WTC11 (cell line): ENCODE measurements at regions of chr16 and their contacts with region 1.

Region 1: GRCh38 chr16:30984669-30985400 is at the start of gene HSD3B7:
- DNase-seq: peak; percentile 95
- ATAC-seq: peak; percentile 85
- H3K4me3 Mint-ChIP-seq: peak within 1 kb of the TSS; percentile 61
- H3K27ac Mint-ChIP-seq: 0 out of 2 replicates have a peak within 1 kb of the TSS, but pooled peaks have one; percentile 27
- H3K4me1 Mint-ChIP-seq: peaks cover 6% of the 10 kb centered on the region
- H3K27me3 Mint-ChIP-seq: no peaks in the 10 kb centered on the region
- CTCF ChIP-seq: peak; percentile 97
- total RNA-seq, gene HSD3B7: 4.1 to 4.5 TPM (median 4.5 TPM) in 3 replicates

Region 2: DNA sequence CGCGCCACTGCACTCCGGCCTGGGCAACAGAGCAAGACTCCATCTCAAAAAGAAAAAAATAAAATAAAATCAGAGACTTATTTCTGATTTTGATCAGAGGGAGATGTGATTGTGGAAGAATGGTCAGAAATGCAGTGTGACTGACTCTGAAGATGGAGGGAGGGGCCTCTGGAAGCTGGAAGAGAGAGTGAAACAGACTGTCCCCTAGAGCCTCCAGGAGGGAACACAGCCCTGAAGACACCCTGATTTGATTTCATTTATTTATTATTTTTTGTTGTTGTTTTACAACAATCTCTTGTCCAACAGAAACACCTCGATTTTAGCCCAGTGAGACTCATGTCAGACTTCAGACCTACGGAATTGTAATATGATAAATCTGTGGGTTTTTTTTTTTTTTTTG is 117.1 kb before region 1 on chr16:
- CTCF ChIA-PET with region 1: no interaction called
- POLR2A ChIA-PET with region 1: no interaction called
- DNase-seq: no peak
- ATAC-seq: peak; percentile 81
- H3K4me3 Mint-ChIP-seq: no peak overlapping the region
- H3K27ac Mint-ChIP-seq: no peak overlapping the region
- H3K4me1 Mint-ChIP-seq: no peaks in the 10 kb centered on the region
- H3K27me3 Mint-ChIP-seq: peaks cover 27% of the 10 kb centered on the region
- CTCF ChIP-seq: no peak

Region 3: GRCh38 chr16:30953511-30954124 is 31.2 kb before region 1 on chr16:
- CTCF ChIA-PET with region 1: interaction called, 29 read pairs
- POLR2A ChIA-PET with region 1: interaction called, 3 read pairs
- DNase-seq: peak; percentile 91
- ATAC-seq: peak; percentile 66
- H3K4me3 Mint-ChIP-seq: no peak overlapping the region
- H3K27ac Mint-ChIP-seq: no peak overlapping the region
- H3K4me1 Mint-ChIP-seq: peaks cover 19% of the 10 kb centered on the region
- H3K27me3 Mint-ChIP-seq: peaks cover 3% of the 10 kb centered on the region; the same call in 1 of the 2 replicates
- CTCF ChIP-seq: peak; percentile 64; the same call in 1 of the 2 replicates

Region 4: GRCh38 chr16:31016018-31016417 is 31.2 kb after region 1 on chr16:
- CTCF ChIA-PET with region 1: interaction called, 19 read pairs
- POLR2A ChIA-PET with region 1: no interaction called
- DNase-seq: no peak
- ATAC-seq: peak; percentile 78
- H3K4me3 Mint-ChIP-seq: no peak overlapping the region
- H3K27ac Mint-ChIP-seq: no peak overlapping the region
- H3K4me1 Mint-ChIP-seq: peaks cover 5% of the 10 kb centered on the region
- H3K27me3 Mint-ChIP-seq: peaks cover 34% of the 10 kb centered on the region
- CTCF ChIP-seq: no peak

Region 5: DNA sequence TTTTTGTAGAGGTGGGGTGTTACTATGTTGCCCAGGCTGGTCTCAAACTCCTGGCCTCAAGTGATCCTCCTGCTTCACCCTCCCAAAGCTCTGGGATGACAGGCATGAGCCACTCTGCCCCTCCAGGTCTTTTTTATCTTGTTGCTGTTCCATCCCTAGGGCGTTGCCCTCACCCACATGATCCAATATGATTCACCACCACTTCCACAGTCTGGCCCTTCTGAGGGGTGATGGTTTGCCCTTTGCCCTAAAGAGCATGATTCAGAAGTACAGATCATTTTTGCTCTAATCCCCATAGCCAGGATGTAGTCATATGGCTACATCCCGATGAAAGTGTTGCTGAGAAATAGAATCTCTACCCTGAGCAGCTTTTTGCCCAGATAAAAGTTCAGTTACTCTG is 67.3 kb after region 1 on chr16:
- CTCF ChIA-PET with region 1: interaction called, 18 read pairs
- POLR2A ChIA-PET with region 1: interaction called, 3 read pairs
- DNase-seq: no peak
- ATAC-seq: no peak
- H3K4me3 Mint-ChIP-seq: no peak overlapping the region
- H3K27ac Mint-ChIP-seq: no peak overlapping the region
- H3K4me1 Mint-ChIP-seq: peaks cover 15% of the 10 kb centered on the region
- H3K27me3 Mint-ChIP-seq: peaks cover 15% of the 10 kb centered on the region
- CTCF ChIP-seq: no peak

Region 6: GRCh38 chr16:31099860-31100638 is 115.2 kb after region 1 on chr16:
- CTCF ChIA-PET with region 1: interaction called, 11 read pairs
- POLR2A ChIA-PET with region 1: no interaction called
- DNase-seq: no peak
- ATAC-seq: no peak
- H3K4me3 Mint-ChIP-seq: no peak overlapping the region
- H3K27ac Mint-ChIP-seq: no peak overlapping the region
- H3K4me1 Mint-ChIP-seq: peaks cover 5% of the 10 kb centered on the region
- H3K27me3 Mint-ChIP-seq: peaks cover 11% of the 10 kb centered on the region
- CTCF ChIP-seq: no peak

Region 7: DNA sequence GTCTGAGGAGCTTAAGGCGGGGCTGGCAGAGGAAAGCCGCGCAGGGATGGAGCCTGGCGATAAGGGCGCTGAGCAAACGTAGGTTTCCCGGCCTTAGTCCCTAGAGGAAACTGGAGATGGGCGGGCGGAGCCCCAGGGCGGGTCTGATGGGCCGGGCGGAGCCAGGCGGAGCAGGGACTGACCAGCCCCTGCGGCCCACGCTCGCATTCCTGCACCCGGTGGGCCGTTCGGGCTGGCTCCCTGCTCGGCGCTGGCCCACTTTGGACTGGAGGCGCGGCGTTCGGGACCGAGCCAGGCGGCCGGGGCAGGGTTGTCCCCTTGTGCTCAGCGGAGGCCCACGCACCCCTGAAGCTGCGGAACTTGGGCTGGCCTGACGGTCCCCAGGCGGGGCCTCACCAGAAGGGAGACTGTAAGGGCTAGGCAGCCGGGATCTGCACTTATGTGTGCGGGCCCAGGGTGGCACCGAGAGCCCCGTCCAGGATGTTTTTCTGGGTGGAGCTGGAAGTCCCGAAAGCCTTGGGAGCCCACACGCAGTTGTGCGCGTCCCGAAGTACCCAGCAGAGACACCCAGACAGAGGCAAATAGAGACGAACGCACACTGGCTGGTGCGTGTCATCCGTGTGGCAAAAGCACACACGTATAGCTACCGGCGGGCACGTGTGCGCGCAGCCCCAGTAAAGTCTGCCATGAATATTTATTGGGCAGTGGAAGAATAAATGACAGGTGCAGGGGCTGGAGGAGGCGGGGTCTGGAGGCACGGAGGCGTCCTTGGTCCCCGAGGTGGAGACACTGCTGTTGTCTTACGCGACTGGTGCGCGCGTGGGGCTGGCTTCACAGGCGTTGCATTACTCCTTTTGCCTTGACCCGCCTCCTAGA is 230.7 kb after region 1 on chr16:
- CTCF ChIA-PET with region 1: interaction called, 15 read pairs
- POLR2A ChIA-PET with region 1: no interaction called
- DNase-seq: peak; percentile 89
- ATAC-seq: peak; percentile 85
- H3K4me3 Mint-ChIP-seq: peak overlapping the region; percentile 77
- H3K27ac Mint-ChIP-seq: no peak overlapping the region
- H3K4me1 Mint-ChIP-seq: peaks cover 30% of the 10 kb centered on the region
- H3K27me3 Mint-ChIP-seq: peaks cover 57% of the 10 kb centered on the region
- CTCF ChIP-seq: no peak